PC-3 (cell line): ENCODE measurements at regions of chr1 and their contacts with region 1.

Region 1: GRCh38 chr1:180515864-180516388 is 13.5 kb upstream of the ACBD6 start:
- DNase-seq: peak; percentile 72
- ATAC-seq: peak; percentile 90
- H3K4me3 ChIP-seq: no peak overlapping the region
- H3K27ac ChIP-seq: no peak overlapping the region
- H3K4me1 ChIP-seq: 0 out of 2 replicates have a peak, but pooled peaks cover 2% of the 10 kb centered on the region
- H3K27me3 ChIP-seq: no peaks in the 10 kb centered on the region
- CTCF ChIP-seq: peak; percentile 70

Region 2: GRCh38 chr1:180778782-180779398 is 263.0 kb after region 1 on chr1:
- CTCF ChIA-PET with region 1: no interaction called
- POLR2A ChIA-PET with region 1: no interaction called
- intact Hi-C with region 1: loop called (anchors 5 kb)
- DNase-seq: peak; percentile 38
- ATAC-seq: peak; percentile 53
- H3K4me3 ChIP-seq: no peak overlapping the region
- H3K27ac ChIP-seq: no peak overlapping the region
- H3K4me1 ChIP-seq: no peaks in the 10 kb centered on the region
- H3K27me3 ChIP-seq: no peaks in the 10 kb centered on the region
- CTCF ChIP-seq: peak; percentile 71

Region 3: GRCh38 chr1:180863158-180863775 is 347.3 kb after region 1 on chr1:
- CTCF ChIA-PET with region 1: interaction called, 6 read pairs
- POLR2A ChIA-PET with region 1: no interaction called
- intact Hi-C with region 1: loop called (anchors 1 kb)
- DNase-seq: peak; percentile 71
- ATAC-seq: no peak
- H3K4me3 ChIP-seq: no peak overlapping the region
- H3K27ac ChIP-seq: no peak overlapping the region
- H3K4me1 ChIP-seq: no peaks in the 10 kb centered on the region
- H3K27me3 ChIP-seq: no peaks in the 10 kb centered on the region
- CTCF ChIP-seq: peak; percentile 69

Region 4: GRCh38 chr1:181105134-181106021 is 589.5 kb after region 1 on chr1:
- CTCF ChIA-PET with region 1: no interaction called
- POLR2A ChIA-PET with region 1: interaction called, 15 read pairs
- intact Hi-C with region 1: no loop called
- DNase-seq: peak; percentile 85
- ATAC-seq: peak; percentile 72
- H3K4me3 ChIP-seq: peak overlapping the region; percentile 68
- H3K27ac ChIP-seq: peak overlapping the region; percentile 91
- H3K4me1 ChIP-seq: peaks cover 64% of the 10 kb centered on the region
- H3K27me3 ChIP-seq: no peaks in the 10 kb centered on the region
- CTCF ChIP-seq: no peak